GM13977 (cell line): ENCODE measurements at regions of chr13 and their contacts with region 1.

Region 1: GRCh38 chr13:21476893-21477472 is 17.9 kb upstream of the ZDHHC20 start:
- DNase-seq: peak; percentile 78
- CTCF ChIP-seq: peak; percentile 90

Region 2: DNA sequence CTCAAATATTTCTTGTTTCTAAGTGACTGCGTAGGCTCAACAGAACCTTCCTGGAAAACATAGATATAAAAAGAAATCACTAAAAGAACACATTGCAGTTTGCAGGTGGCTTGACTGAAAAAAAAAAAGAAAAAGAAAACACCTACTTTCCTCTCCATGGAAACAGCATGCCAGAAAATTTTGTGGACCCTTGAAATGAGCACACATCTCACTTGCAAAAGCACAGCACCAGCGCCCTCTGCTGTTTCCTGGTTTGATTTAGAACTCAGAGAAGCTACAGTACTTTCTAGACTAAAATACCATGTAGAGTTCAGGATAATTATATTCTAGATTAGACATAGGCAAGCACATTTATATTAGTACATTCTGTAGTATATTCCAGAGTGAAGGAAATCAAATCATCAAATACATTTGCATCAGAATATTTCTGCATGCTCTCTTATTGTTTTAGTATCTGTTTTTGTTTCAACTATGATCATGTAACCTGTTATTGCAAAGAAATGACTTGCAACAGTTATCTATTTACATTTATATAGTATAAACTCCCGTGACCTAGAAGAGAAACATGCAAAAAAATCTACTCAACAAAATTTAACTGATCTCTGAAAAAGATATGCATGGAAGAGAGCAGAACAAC is 552.1 kb before region 1 on chr13:
- in situ Hi-C with region 1: loop called (anchors 25 kb)
- DNase-seq: peak; percentile 56
- CTCF ChIP-seq: peak; percentile 81

Region 3: GRCh38 chr13:21124852-21125251 is 352.1 kb before region 1 on chr13:
- in situ Hi-C with region 1: loop called (anchors 25 kb)
- DNase-seq: no peak
- CTCF ChIP-seq: no peak

Region 4: GRCh38 chr13:21297914-21298831 is 178.8 kb before region 1 on chr13:
- in situ Hi-C with region 1: loop called (anchors 10 kb)
- DNase-seq: peak; percentile 94
- CTCF ChIP-seq: peak; percentile 98

Region 5: GRCh38 chr13:21932996-21933395 is 456.0 kb after region 1 on chr13:
- in situ Hi-C with region 1: no loop called
- DNase-seq: no peak
- CTCF ChIP-seq: no peak